Activated CD4-positive, alpha-beta T cell treated with anti-CD3 and anti-CD28 coated beads for 36 hours (primary cell): ENCODE measurements at regions of chr18 and their contacts with region 1.

Region 1: DNA sequence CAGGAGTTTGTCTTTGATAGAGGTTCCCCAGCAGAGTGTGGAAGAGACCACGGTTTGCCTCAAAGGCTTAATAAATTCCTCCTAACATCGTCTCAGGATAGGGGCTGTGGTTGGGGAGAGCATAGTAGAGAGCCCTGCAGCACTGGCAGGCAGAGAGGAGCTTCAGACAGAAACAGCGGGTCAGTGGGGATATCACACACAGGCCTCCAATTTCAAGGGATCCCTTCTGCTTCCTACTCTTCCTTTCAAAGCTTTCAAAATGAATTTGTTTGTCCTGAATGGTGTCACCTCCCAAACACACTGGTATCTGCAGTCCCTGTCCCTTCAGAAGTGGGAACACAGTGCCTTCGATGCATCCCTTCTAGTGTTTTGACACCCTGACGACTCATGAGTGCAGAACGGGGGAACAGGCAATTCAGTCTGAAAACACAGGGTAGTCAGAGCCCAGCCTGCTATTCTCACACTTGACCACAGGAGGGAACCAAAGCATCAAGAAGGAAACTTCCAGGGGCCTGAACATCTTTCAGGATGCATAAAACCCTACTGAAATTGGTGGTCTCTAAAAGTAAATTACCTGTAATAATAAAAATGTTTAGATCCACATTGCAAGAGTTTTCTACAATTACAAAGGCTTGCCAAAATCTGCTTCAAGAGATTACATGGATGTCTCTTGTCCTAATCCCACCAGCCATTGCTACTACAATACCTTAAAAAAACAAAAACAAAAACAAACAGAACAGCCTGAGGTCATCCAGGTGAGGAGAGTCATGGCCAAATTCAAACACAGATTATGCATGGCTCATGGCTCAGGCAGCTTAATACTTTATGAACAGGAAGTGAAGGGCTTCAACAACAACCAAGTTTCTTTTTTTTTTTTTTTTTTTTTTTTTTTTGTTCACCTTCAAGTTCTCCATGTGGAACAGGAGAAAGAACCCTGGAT is 49.8 kb downstream of the SLC14A2 start:
- DNase-seq: peak; percentile 76
- ATAC-seq: peak; percentile 60
- H3K4me3 Mint-ChIP-seq: no peak overlapping the region
- H3K27ac Mint-ChIP-seq: peak overlapping the region; percentile 53
- H3K4me1 Mint-ChIP-seq: peaks cover 52% of the 10 kb centered on the region
- H3K27me3 Mint-ChIP-seq: no peaks in the 10 kb centered on the region

Region 2: DNA sequence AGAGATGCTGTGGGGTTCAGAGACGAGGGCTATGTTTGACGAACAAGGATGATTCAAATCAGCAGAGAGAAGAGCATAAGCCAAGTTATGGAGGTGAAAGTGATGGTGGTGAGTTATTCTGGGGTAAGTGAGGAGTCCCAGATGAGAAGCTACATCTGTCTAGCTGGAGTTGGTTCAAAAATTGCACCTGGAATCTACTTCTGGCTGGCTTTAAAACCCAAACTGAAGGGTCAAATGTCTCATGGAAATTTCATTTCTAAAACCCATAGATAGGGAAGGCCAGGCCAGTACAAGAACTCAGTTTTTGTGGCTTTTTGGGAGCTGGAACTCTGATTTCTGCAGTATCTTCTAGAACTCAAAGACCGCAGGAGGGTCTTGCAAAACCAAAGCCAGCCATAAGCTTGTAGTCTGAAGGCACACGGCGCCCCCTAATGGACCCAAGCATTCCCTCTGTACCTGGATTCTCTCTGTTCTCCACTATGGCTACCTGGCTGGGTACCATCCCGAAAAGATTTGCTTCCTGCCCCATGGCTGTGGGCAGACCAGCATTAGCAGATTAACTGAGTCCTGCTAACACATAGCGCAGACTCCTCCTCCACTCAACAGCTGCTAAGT is 278.9 kb before region 1 on chr18:
- CTCF ChIA-PET with region 1: no interaction called
- POLR2A ChIA-PET with region 1: no interaction called
- intact Hi-C with region 1: no loop called
- DNase-seq: peak; percentile 36
- ATAC-seq: no peak
- H3K4me3 Mint-ChIP-seq: no peak overlapping the region
- H3K27ac Mint-ChIP-seq: no peak overlapping the region
- H3K4me1 Mint-ChIP-seq: no peaks in the 10 kb centered on the region
- H3K27me3 Mint-ChIP-seq: peaks cover 28% of the 10 kb centered on the region

Region 3: GRCh38 chr18:45576931-45577330 is 88.2 kb before region 1 on chr18:
- CTCF ChIA-PET with region 1: no interaction called
- POLR2A ChIA-PET with region 1: no interaction called
- intact Hi-C with region 1: no loop called
- DNase-seq: no peak
- ATAC-seq: no peak
- H3K4me3 Mint-ChIP-seq: no peak overlapping the region
- H3K27ac Mint-ChIP-seq: no peak overlapping the region
- H3K4me1 Mint-ChIP-seq: no peaks in the 10 kb centered on the region
- H3K27me3 Mint-ChIP-seq: peaks cover 4% of the 10 kb centered on the region

Region 4: DNA sequence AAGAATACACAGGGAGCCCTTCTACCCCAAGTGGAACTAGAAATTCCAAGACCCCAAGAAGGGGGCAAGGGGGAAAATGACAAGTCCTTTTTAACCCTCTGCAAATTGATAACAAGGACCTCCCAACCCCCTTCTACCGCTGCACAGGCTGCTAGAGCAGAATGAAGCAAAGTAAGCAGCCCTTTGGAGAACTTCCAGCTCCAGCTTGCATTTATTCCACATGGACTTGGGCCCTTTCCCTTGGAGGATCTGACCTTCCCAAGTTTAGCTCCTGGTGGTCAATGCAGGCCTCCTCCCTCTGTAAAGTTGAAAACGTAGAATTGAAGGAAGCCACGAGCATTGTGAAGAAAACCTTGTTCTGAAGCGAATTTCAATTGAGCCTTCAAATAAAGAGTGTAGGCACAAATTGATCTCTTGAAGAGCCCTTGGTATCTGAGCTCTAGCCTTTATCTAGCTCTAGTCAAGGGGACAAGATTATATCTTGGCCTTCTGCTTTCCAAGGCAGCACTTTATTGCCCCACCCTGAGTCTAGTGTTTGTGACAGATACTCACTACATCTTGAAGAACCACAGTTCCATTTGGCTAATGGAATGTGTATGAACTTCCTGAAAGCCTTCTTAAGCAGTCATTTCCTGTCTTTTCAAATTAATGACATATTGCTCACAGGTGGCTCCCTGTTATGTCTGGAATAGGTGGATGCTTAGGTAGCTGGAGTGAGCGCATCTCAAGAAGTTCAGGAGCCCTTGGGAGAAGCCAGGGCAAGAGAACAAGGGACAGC is 12.6 kb before region 1 on chr18:
- CTCF ChIA-PET with region 1: interaction called, 20 read pairs
- POLR2A ChIA-PET with region 1: no interaction called
- intact Hi-C with region 1: no loop called
- DNase-seq: no peak
- ATAC-seq: no peak
- H3K4me3 Mint-ChIP-seq: no peak overlapping the region
- H3K27ac Mint-ChIP-seq: no peak overlapping the region
- H3K4me1 Mint-ChIP-seq: peaks cover 15% of the 10 kb centered on the region
- H3K27me3 Mint-ChIP-seq: no peaks in the 10 kb centered on the region

Region 5: GRCh38 chr18:45690975-45691815 is 26.1 kb after region 1 on chr18:
- CTCF ChIA-PET with region 1: interaction called, 71 read pairs
- POLR2A ChIA-PET with region 1: interaction called, 5 read pairs
- intact Hi-C with region 1: loop called (anchors 1 kb)
- DNase-seq: peak; percentile 87
- ATAC-seq: peak; percentile 17
- H3K4me3 Mint-ChIP-seq: no peak overlapping the region
- H3K27ac Mint-ChIP-seq: no peak overlapping the region
- H3K4me1 Mint-ChIP-seq: peaks cover 42% of the 10 kb centered on the region
- H3K27me3 Mint-ChIP-seq: peaks cover 7% of the 10 kb centered on the region

Region 6: GRCh38 chr18:45775241-45775676 is 110.2 kb after region 1 on chr18:
- CTCF ChIA-PET with region 1: interaction called, 10 read pairs
- POLR2A ChIA-PET with region 1: no interaction called
- intact Hi-C with region 1: no loop called
- DNase-seq: peak; percentile 85
- ATAC-seq: peak; percentile 95
- H3K4me3 Mint-ChIP-seq: peak overlapping the region; percentile 75
- H3K27ac Mint-ChIP-seq: peak overlapping the region; percentile 49
- H3K4me1 Mint-ChIP-seq: peaks cover 16% of the 10 kb centered on the region
- H3K27me3 Mint-ChIP-seq: peaks cover 29% of the 10 kb centered on the region

Region 7: GRCh38 chr18:45874491-45875184 is 209.5 kb after region 1 on chr18:
- CTCF ChIA-PET with region 1: interaction called, 172 read pairs
- POLR2A ChIA-PET with region 1: interaction called, 7 read pairs
- intact Hi-C with region 1: loop called (anchors 1 kb)
- DNase-seq: peak; percentile 84
- ATAC-seq: peak; percentile 91
- H3K4me3 Mint-ChIP-seq: peak overlapping the region; percentile 41
- H3K27ac Mint-ChIP-seq: peak overlapping the region; percentile 96
- H3K4me1 Mint-ChIP-seq: peaks cover 34% of the 10 kb centered on the region
- H3K27me3 Mint-ChIP-seq: no peaks in the 10 kb centered on the region

Region 8: GRCh38 chr18:45910405-45911023 is 245.4 kb after region 1 on chr18:
- CTCF ChIA-PET with region 1: interaction called, 14 read pairs
- POLR2A ChIA-PET with region 1: no interaction called
- intact Hi-C with region 1: loop called in 1 of 2 experiments (anchors 1 kb)
- DNase-seq: peak; percentile 81
- ATAC-seq: peak; percentile 89
- H3K4me3 Mint-ChIP-seq: no peak overlapping the region
- H3K27ac Mint-ChIP-seq: no peak overlapping the region
- H3K4me1 Mint-ChIP-seq: no peaks in the 10 kb centered on the region
- H3K27me3 Mint-ChIP-seq: no peaks in the 10 kb centered on the region

Region 9: DNA sequence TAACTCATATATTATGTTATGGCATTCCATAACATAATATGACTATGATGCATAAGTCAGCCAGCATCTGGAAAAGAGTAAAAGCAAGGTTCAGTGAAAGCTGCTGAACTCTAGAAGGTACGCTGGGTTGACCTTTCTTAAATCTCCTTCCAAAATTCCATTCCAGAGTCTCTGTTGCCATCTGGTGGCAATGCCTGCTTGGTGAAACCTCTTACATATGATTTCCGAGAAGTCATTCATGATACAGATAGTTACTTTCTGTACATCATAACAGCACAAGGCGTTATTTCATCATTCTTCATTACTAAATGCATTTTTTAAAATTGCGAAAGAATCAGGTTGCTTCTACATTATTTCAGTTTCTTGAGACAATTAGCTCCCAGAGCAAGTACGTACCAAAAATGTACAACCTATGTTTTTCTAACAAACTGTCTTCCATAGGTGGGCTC is 309.0 kb after region 1 on chr18:
- CTCF ChIA-PET with region 1: interaction called, 7 read pairs
- POLR2A ChIA-PET with region 1: no interaction called
- intact Hi-C with region 1: loop called (anchors 1 kb)
- DNase-seq: peak; percentile 83
- ATAC-seq: peak; percentile 90
- H3K4me3 Mint-ChIP-seq: no peak overlapping the region
- H3K27ac Mint-ChIP-seq: peak overlapping the region; percentile 89
- H3K4me1 Mint-ChIP-seq: peaks cover 11% of the 10 kb centered on the region
- H3K27me3 Mint-ChIP-seq: no peaks in the 10 kb centered on the region